ENCODE measurements at regions of chr4 and their contacts with region 1.

Region 1: DNA sequence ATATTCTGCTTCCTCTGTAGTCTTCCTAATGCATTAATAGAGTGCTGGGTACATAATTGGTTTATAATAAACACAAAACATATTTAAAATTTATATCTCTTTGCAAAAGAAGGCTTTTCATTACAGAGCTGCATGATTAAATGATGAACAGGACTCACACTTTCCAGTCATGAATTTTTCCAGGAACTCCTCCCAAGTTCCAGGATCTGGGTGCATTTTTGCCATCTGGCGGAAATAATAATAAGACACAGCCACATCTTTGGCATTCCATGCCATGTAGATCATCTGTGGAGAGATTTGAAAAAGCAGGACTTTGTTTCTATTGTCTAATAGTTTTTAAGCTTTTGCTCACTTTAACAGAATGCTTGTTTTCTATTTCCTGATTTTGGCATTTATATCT is 40.2 kb upstream of the SULT1B1 start:
- DNase-seq: peak; percentile 86
- H3K4me3 ChIP-seq: no peak overlapping the region
- H3K27ac ChIP-seq: peak overlapping the region; percentile 97
- H3K4me1 ChIP-seq: peaks cover 23% of the 10 kb centered on the region
- H3K27me3 ChIP-seq: no peaks in the 10 kb centered on the region
- CTCF ChIP-seq: no peak
- POLR2A ChIP-seq: peak; percentile 31

Region 2: DNA sequence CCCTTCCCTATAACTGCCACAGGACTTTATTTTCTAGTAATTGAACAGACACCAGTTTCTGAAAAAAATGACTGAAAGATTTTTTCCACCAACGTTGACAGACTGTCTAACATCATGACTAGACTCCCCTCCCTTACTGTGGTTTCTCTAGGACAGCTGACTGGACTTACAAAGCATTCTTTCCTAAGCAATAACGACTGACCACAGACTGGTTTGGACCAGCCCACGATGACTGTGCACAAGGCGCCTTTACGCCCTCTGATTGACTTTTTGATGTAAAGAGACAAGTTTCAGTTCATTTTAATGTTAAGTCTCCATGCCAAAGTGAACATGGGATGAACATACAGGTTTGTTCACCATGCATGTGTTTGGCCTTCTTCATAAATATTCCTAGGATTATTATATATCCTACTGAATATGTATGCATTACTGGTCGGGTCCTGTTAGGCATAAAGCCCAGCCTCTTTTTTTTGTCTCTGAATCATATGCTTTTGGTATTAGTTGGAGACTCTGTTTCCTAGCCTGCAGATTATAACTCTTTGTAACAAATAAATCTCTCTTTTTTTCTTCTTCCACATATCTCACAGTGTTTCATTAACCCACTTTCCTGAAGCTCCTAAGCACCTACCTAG is 254.3 kb before region 1 on chr4:
- CTCF ChIA-PET with region 1: no interaction called
- POLR2A ChIA-PET with region 1: no interaction called
- dilution Hi-C with region 1: no loop called
- intact Hi-C with region 1: no loop called
- DNase-seq: no peak
- H3K4me3 ChIP-seq: no peak overlapping the region
- H3K27ac ChIP-seq: no peak overlapping the region
- H3K4me1 ChIP-seq: no peaks in the 10 kb centered on the region
- H3K27me3 ChIP-seq: no peaks in the 10 kb centered on the region
- CTCF ChIP-seq: no peak
- POLR2A ChIP-seq: no peak

Region 3: GRCh38 chr4:69718396-69719253 is 82.0 kb before region 1 on chr4:
- CTCF ChIA-PET with region 1: no interaction called
- POLR2A ChIA-PET with region 1: no interaction called
- dilution Hi-C with region 1: no loop called
- intact Hi-C with region 1: loop called (anchors 1 kb)
- DNase-seq: peak; percentile 83
- H3K4me3 ChIP-seq: no peak overlapping the region
- H3K27ac ChIP-seq: peak overlapping the region; percentile 80
- H3K4me1 ChIP-seq: peaks cover 56% of the 10 kb centered on the region
- H3K27me3 ChIP-seq: no peaks in the 10 kb centered on the region
- CTCF ChIP-seq: no peak
- POLR2A ChIP-seq: peak; percentile 4

Region 4: GRCh38 chr4:69727926-69728325 is 72.7 kb before region 1 on chr4:
- CTCF ChIA-PET with region 1: no interaction called
- POLR2A ChIA-PET with region 1: no interaction called
- dilution Hi-C with region 1: no loop called
- intact Hi-C with region 1: loop called (anchors 1 kb)
- DNase-seq: no peak
- H3K4me3 ChIP-seq: no peak overlapping the region
- H3K27ac ChIP-seq: peak overlapping the region; percentile 94
- H3K4me1 ChIP-seq: peaks cover 60% of the 10 kb centered on the region
- H3K27me3 ChIP-seq: no peaks in the 10 kb centered on the region
- CTCF ChIP-seq: no peak
- POLR2A ChIP-seq: no peak

Region 5: DNA sequence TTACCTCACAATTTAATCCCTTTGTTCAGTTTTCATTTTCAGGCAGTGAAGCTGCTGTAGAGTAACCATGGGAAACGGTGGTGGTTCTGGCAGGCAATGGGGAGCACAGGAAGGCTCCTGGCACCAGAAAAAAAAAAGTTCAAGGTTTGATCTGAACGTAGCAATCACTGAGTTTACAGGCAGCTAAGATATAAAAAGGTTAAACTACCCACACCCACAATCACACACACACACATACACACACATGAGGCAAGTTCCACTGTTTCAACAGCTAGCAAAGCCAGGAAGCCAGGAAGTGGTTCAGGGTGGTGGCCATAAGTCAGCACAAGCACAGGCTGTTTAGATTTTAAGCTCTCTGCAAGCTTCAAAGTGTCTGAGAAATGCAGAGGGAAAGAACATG is 40.1 kb before region 1 on chr4 and contains the start of gene SULT1B1:
- CTCF ChIA-PET with region 1: interaction called, 7 read pairs
- POLR2A ChIA-PET with region 1: interaction called, 3 read pairs
- dilution Hi-C with region 1: no loop called
- intact Hi-C with region 1: loop called (anchors 1 kb)
- DNase-seq: peak; percentile 89
- H3K4me3 ChIP-seq: peak within 1 kb of the TSS; percentile 21 to 79 (median 27)
- H3K27ac ChIP-seq: peak within 1 kb of the TSS; percentile 95
- H3K4me1 ChIP-seq: peaks cover 69% of the 10 kb centered on the region
- H3K27me3 ChIP-seq: no peaks in the 10 kb centered on the region
- CTCF ChIP-seq: no peak
- POLR2A ChIP-seq: no peak
- total RNA-seq, gene SULT1B1: 59.5 and 68.2 TPM in 2 replicates

Region 6: DNA sequence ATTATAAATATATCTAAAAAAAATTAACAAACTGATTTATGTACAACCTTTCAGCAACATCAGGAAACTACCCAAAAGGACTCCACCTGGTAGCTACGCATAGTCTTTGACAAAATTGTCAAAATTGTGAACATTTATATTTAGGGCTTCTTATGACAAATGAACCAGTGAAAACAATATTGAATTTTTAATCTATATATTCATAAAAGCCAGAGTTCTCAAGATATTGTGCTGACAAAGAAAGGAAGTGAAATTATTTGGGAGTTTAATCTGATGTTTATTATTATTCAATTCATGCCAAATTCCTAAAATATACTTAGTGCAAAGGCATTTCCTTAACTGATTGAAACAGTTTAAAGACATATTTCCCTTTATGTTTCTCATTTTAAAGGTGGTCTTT is 34.8 kb before region 1 on chr4:
- CTCF ChIA-PET with region 1: interaction called, 7 read pairs
- POLR2A ChIA-PET with region 1: interaction called, 3 read pairs
- dilution Hi-C with region 1: no loop called
- intact Hi-C with region 1: loop called (anchors 1 kb)
- DNase-seq: peak; percentile 73
- H3K4me3 ChIP-seq: no peak overlapping the region
- H3K27ac ChIP-seq: peak overlapping the region; percentile 73
- H3K4me1 ChIP-seq: peaks cover 43% of the 10 kb centered on the region
- H3K27me3 ChIP-seq: no peaks in the 10 kb centered on the region
- CTCF ChIP-seq: no peak
- POLR2A ChIP-seq: no peak

Region 7: DNA sequence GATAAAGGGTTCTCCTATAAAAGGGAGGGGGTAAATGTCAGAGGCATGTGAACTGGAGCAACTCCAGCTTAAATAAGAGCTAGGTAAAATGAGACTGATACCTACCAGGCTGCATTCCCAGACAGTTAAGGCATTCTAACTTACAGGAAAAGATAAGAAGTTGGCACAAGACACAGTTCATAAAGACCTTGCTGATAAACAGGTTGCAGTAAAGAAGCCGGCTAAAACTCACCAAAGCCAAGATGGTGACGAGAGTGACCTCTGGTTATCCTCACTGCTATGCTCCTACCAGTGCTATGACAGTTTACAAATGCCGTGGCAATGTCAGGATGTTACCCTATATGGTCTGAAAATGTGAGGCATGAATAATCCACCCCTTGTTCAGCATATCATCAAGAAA is 27.1 kb before region 1 on chr4:
- CTCF ChIA-PET with region 1: interaction called, 6 read pairs
- POLR2A ChIA-PET with region 1: interaction called, 4 read pairs
- dilution Hi-C with region 1: no loop called
- intact Hi-C with region 1: loop called (anchors 1 kb)
- DNase-seq: peak; percentile 97
- H3K4me3 ChIP-seq: no peak overlapping the region
- H3K27ac ChIP-seq: peak overlapping the region; percentile 95
- H3K4me1 ChIP-seq: peaks cover 22% of the 10 kb centered on the region
- H3K27me3 ChIP-seq: no peaks in the 10 kb centered on the region
- CTCF ChIP-seq: no peak
- POLR2A ChIP-seq: no peak

Measured in endothelial cell of umbilical vein (primary cell).